ENCODE measurements at regions of chr2 and their contacts with region 1.

Region 1: GRCh38 chr2:239934571-239935171 is 90.5 kb downstream of the NDUFA10 start:
- DNase-seq: peak; percentile 82
- ATAC-seq: peak; percentile 90
- H3K4me3 Mint-ChIP-seq: no peak overlapping the region
- H3K27ac Mint-ChIP-seq: no peak overlapping the region
- H3K4me1 Mint-ChIP-seq: peaks cover 9% of the 10 kb centered on the region
- H3K27me3 Mint-ChIP-seq: no peaks in the 10 kb centered on the region

Region 2: DNA sequence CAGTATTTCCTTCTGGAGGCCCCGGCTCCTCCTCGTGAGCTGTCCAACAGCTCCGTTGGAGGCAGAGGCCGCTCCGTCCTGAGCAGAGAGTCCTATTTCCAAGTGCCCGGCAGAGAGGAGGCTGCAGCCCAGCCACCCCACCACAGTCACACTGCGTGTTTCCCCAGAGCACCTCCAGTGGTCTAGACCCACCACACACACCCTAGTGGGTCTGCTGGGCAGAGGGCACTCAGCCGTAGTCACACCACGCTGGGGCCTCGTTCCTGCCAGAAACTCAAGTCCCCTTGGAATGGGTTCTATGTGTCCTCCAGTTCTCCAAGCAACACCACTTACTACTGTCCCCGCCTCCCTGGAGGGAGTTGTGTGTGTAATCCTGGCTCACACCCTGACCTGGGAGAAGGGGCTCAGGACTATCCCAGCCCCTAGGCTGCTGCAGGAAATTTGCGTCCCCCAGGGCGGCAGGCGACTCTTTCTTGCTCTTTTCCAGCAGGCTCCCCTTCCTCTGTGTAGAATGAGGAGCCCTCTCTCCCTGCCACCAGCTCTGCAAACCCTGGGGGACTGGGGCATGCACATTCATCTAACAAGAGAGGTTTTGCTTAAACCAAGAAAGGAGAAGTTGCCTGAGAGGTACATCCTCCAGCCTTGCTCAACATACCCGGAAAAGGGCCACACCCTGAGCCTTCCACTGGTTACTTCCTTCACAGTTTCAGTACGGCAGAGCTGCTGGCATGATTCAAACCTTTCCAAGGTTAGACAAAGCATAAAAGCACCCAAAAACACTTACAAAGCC is 23.6 kb before region 1 on chr2:
- CTCF ChIA-PET with region 1: interaction called, 10 read pairs
- POLR2A ChIA-PET with region 1: no interaction called
- intact Hi-C with region 1: no loop called
- DNase-seq: peak; percentile 56
- ATAC-seq: peak; percentile 92
- H3K4me3 Mint-ChIP-seq: no peak overlapping the region
- H3K27ac Mint-ChIP-seq: peak overlapping the region; percentile 77
- H3K4me1 Mint-ChIP-seq: peaks cover 16% of the 10 kb centered on the region
- H3K27me3 Mint-ChIP-seq: no peaks in the 10 kb centered on the region

Region 3: DNA sequence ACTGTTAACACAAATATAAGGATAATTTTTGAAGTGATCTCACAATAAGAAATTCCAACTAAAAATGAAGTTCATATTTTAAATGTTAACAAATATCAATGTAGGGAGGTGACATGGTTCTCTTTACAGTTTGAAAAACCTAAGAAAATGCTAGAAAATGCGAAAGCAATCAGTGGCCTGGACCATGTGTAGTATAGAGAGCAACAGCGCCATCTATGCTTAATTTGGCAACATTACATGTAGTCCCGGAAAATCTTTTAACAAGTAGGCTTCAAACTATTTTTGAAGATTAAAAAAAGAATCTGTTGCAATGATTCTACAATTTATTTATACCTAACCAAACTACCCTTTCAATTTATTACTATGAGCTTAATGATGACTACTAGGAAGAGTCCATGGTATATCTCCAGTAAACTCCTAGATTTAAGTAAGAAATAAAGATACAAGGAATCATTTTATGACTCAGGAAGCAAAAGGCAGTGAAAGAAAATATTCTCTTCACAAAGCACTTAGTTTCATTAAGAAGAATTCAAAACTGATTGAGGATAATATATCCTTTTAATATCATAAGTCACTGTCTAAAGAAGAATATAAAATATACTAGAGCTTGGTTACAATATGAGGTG is 57.1 kb after region 1 on chr2:
- CTCF ChIA-PET with region 1: interaction called, 14 read pairs
- POLR2A ChIA-PET with region 1: no interaction called
- intact Hi-C with region 1: loop called in 1 of 2 experiments (anchors 1 kb)
- DNase-seq: no peak
- ATAC-seq: peak; percentile 71
- H3K4me3 Mint-ChIP-seq: no peak overlapping the region
- H3K27ac Mint-ChIP-seq: no peak overlapping the region
- H3K4me1 Mint-ChIP-seq: no peaks in the 10 kb centered on the region
- H3K27me3 Mint-ChIP-seq: no peaks in the 10 kb centered on the region

Region 4: DNA sequence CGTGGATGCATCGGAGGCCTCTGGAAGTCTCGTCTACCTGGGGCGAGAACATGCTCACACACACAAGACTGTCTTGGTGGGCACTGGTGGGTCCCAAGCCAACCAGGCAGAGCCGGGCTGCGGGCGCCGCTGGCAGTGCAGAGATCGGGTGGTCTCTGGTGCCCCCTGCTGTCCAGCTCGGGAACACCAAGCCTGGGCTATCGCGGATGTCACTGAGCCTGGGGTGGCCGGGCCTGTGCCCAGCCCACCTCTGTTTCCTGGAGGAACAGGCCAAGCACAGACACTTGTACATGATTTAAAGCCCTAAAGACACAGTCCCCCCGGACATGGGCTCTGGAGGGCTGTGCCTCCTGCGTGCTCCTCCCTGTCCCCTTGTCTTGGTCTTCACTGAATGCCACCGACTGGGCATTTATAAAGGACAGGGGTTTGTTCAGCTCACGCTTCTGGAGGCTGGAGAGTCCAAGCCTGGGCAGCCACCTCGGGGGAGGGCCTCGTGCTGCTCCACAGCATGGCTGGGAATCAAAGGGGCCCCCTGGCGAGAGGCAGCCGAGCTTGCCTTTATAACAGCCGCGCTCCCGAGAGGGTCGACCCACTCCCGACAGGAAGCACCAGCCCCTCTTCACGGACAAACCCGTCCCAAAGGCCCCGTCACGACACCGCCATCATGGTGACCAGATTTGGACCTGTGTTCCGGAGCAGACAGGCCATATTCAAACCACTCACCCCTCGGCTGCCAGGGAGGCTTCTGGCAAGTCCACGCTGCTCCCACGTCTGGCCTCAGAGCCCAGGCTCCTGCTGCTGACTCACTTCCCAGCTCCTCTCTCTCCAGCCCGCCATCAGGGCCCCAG is 209.4 kb after region 1 on chr2:
- CTCF ChIA-PET with region 1: interaction called, 7 read pairs
- POLR2A ChIA-PET with region 1: no interaction called
- intact Hi-C with region 1: loop called (anchors 1 to 2 kb)
- DNase-seq: peak; percentile 88
- ATAC-seq: peak; percentile 96
- H3K4me3 Mint-ChIP-seq: no peak overlapping the region
- H3K27ac Mint-ChIP-seq: no peak overlapping the region
- H3K4me1 Mint-ChIP-seq: no peaks in the 10 kb centered on the region
- H3K27me3 Mint-ChIP-seq: peaks cover 4% of the 10 kb centered on the region